A673 (cell line): ENCODE measurements at regions of chr11 and their contacts with region 1.

Region 1: GRCh38 chr11:83836883-83837654 is 550.9 kb upstream of the CCDC90B start:
- DNase-seq: peak; percentile 77
- H3K4me3 ChIP-seq: no peak overlapping the region
- H3K27ac ChIP-seq: no peak overlapping the region
- H3K4me1 ChIP-seq: no peaks in the 10 kb centered on the region
- H3K27me3 ChIP-seq: peaks cover 34% of the 10 kb centered on the region
- CTCF ChIP-seq: peak; percentile 93

Region 2: GRCh38 chr11:83782329-83782728 is 54.7 kb before region 1 on chr11:
- CTCF ChIA-PET with region 1: no interaction called
- POLR2A ChIA-PET with region 1: no interaction called
- intact Hi-C with region 1: no loop called
- DNase-seq: no peak
- H3K4me3 ChIP-seq: no peak overlapping the region
- H3K27ac ChIP-seq: no peak overlapping the region
- H3K4me1 ChIP-seq: peaks cover 79% of the 10 kb centered on the region
- H3K27me3 ChIP-seq: no peaks in the 10 kb centered on the region
- CTCF ChIP-seq: no peak

Region 3: DNA sequence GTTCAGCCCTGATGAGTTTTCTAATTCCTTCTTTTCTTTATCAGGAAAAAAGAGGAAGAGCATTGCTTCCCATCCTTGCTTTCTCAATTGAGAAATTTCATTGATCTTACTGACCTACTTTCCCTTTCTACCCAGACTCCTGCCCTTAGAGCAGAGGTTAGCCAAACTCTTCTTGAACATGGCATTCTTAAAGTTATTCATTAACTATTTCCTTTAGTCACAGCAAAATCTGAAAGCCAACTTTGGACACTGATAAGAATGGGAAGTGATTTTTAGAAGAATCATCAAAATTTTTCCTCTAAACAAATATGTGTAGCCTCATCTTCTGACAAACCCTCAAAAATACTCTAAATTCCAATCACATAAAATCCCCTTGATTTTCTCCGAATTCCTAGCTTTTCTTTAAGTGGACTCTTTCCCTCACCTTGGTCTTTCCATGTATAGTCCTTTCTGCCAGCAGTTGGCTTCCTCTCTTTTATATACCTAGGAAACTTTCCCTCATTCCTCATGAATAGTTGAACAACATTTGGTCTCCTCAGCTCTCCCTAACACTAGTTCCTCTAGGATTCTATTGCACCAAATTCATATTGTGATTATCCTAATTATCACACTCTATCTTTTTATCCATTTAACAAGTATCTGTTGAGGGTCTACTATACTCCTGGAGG is 15.8 kb after region 1 on chr11:
- CTCF ChIA-PET with region 1: interaction called, 13 read pairs
- POLR2A ChIA-PET with region 1: no interaction called
- intact Hi-C with region 1: no loop called
- DNase-seq: no peak
- H3K4me3 ChIP-seq: no peak overlapping the region
- H3K27ac ChIP-seq: no peak overlapping the region
- H3K4me1 ChIP-seq: no peaks in the 10 kb centered on the region
- H3K27me3 ChIP-seq: peaks cover 6% of the 10 kb centered on the region
- CTCF ChIP-seq: no peak

Region 4: DNA sequence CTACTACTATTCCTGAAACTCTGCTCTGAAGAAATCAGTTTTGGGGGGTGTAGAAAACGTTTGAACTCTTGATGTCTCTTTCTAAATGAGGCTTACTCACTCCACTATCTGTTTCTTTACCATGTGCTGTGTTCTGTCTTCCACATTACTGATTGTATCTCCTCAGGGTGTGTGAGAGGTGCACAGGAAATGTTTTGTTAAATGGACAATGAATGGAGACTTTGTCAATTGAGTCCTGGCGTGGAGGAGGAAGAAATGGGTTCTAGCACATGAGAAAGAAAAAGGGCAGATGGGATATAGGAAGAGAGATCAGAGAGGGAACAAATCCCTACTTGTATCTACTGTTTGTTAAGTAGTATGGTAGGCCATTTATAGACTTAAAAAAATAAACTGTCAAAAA is 26.2 kb after region 1 on chr11:
- CTCF ChIA-PET with region 1: no interaction called
- POLR2A ChIA-PET with region 1: no interaction called
- intact Hi-C with region 1: no loop called
- DNase-seq: no peak
- H3K4me3 ChIP-seq: no peak overlapping the region
- H3K27ac ChIP-seq: no peak overlapping the region
- H3K4me1 ChIP-seq: no peaks in the 10 kb centered on the region
- H3K27me3 ChIP-seq: no peaks in the 10 kb centered on the region
- CTCF ChIP-seq: no peak

Region 5: GRCh38 chr11:84261707-84262106 is 424.6 kb after region 1 on chr11:
- CTCF ChIA-PET with region 1: interaction called, 6 read pairs
- POLR2A ChIA-PET with region 1: no interaction called
- intact Hi-C with region 1: loop called (anchors 2 kb)
- DNase-seq: peak; percentile 24
- H3K4me3 ChIP-seq: no peak overlapping the region
- H3K27ac ChIP-seq: no peak overlapping the region
- H3K4me1 ChIP-seq: no peaks in the 10 kb centered on the region
- H3K27me3 ChIP-seq: peaks cover 13% of the 10 kb centered on the region
- CTCF ChIP-seq: peak; percentile 58

Region 6: GRCh38 chr11:84524422-84525051 is 687.5 kb after region 1 on chr11:
- CTCF ChIA-PET with region 1: interaction called, 6 read pairs
- POLR2A ChIA-PET with region 1: no interaction called
- intact Hi-C with region 1: loop called (anchors 2 kb)
- DNase-seq: peak; percentile 50
- H3K4me3 ChIP-seq: no peak overlapping the region
- H3K27ac ChIP-seq: no peak overlapping the region
- H3K4me1 ChIP-seq: no peaks in the 10 kb centered on the region
- H3K27me3 ChIP-seq: no peaks in the 10 kb centered on the region
- CTCF ChIP-seq: peak; percentile 70

Region 7: DNA sequence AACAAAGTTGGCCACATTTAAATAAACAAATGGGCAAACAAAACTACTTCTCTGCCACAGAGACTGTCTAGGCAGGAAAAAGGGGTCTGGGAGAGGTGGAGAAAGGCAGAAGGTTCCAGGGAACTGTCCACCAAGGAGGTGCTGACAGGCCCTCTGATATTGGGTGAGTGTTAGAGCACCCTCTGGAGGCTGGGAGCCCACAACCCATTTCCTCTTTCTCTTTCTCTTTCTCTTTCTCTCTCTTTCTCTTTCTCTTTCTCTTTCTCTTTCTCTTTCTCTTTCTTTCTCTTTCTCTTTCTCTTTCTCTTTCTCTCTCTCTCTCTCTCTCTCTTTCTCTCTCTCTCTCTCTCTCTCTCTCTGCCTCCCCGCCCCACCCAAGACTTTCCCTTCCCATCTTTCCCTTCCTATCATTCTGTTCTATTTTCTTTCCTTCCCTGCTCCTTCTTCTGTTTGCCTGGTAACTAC is 877.3 kb after region 1 on chr11:
- CTCF ChIA-PET with region 1: no interaction called
- POLR2A ChIA-PET with region 1: no interaction called
- intact Hi-C with region 1: loop called (anchors 10 kb)
- DNase-seq: peak; percentile 80
- H3K4me3 ChIP-seq: no peak overlapping the region
- H3K27ac ChIP-seq: no peak overlapping the region
- H3K4me1 ChIP-seq: no peaks in the 10 kb centered on the region
- H3K27me3 ChIP-seq: peaks cover 13% of the 10 kb centered on the region
- CTCF ChIP-seq: peak; percentile 77